ENCODE measurements at regions of chr17 and their contacts with region 1.

Region 1: GRCh38 chr17:36486204-36487194 is at the start of gene ZNHIT3:
- DNase-seq: peak; percentile 94
- H3K4me3 ChIP-seq: peak within 1 kb of the TSS; percentile 99
- H3K27ac ChIP-seq: peak within 1 kb of the TSS; percentile 67
- H3K4me1 ChIP-seq: peaks cover 8% of the 10 kb centered on the region
- H3K27me3 ChIP-seq: no peaks in the 10 kb centered on the region
- CTCF ChIP-seq: no peak
- total RNA-seq, gene ZNHIT3: 29.0 to 31.6 TPM

Region 2: GRCh38 chr17:35969558-35970380 is 516.7 kb before region 1 on chr17:
- intact Hi-C with region 1: loop called (anchors 10 kb)
- DNase-seq: peak; percentile 91
- H3K4me3 ChIP-seq: no peak overlapping the region
- H3K27ac ChIP-seq: no peak overlapping the region
- H3K4me1 ChIP-seq: no peaks in the 10 kb centered on the region
- H3K27me3 ChIP-seq: no peaks in the 10 kb centered on the region
- CTCF ChIP-seq: peak; percentile 82

Region 3: DNA sequence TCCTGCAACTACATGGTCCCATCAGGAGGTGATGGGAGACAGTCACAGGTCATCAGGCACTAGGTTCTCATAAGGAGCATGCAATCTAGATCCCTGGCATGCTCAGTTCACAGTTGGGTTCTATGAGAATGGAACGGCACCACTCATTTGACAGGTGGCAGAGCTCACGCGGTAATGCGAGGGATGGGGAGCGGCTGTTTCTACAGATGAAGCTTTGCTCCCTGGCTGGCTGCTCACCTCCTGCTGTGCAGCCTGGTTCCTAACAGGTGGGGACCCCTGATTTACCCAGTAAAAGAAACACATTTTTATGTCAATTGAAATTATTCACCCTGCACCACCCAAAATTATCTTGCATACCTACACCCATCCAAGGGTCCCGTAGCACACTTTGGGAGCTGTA is 42.7 kb before region 1 on chr17:
- intact Hi-C with region 1: no loop called
- DNase-seq: no peak
- H3K4me3 ChIP-seq: no peak overlapping the region
- H3K27ac ChIP-seq: no peak overlapping the region
- H3K4me1 ChIP-seq: no peaks in the 10 kb centered on the region
- H3K27me3 ChIP-seq: no peaks in the 10 kb centered on the region
- CTCF ChIP-seq: no peak